Mammary epithelial cell (primary cell): ENCODE measurements at regions of chr5 and their contacts with region 1.

Region 1: GRCh38 chr5:126384985-126385384 is 38.2 kb upstream of the GRAMD2B start:
- DNase-seq: peak; percentile 60
- H3K4me3 ChIP-seq: peak overlapping the region in 1 of 3 experiments; percentile 5
- H3K27ac ChIP-seq: peak overlapping the region; percentile 55
- H3K4me1 ChIP-seq: peaks cover 23% of the 10 kb centered on the region
- H3K27me3 ChIP-seq: no peaks in the 10 kb centered on the region
- CTCF ChIP-seq: no peak

Region 2: DNA sequence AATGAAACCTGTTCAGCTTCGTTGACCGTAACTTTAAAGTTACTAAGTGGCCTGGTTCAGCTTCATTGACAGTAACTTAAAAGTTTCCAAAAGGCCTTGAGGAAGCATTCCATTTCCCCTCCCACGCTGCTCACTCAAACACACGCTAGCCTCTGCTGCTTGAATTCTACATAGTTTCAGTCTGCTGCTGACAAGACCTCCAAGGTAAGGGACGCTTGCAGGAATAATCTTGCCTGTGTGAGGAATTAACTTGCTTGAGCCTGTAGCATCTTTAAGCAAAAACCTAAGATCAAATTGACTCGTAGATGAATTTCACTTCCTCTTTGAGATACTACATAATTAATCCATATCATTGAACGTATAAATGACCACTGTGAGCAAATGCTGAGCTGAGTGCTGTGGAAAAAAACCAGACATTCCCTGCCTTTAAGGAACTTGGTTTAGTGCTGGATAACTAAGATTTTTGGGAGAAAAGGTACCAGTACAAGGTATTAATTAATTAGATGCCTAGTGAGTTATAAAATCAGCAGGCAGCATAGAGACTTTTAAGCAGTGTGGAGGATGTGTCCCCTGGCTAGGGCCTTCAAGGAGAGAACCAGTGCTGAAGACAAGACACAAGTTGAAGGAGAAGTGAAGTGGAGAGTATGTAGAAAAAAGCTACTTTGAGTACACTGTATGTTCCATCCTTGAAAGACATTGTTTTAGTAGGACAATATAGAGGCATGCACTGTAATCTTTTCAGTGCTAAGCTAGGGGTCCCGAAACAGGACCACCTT is 77.4 kb after region 1 on chr5:
- CTCF ChIA-PET with region 1: no interaction called
- dilution Hi-C with region 1: loop called (anchors 5 kb)
- in situ Hi-C with region 1: no loop called
- intact Hi-C with region 1: no loop called
- DNase-seq: peak; percentile 51
- H3K4me3 ChIP-seq: no peak overlapping the region
- H3K27ac ChIP-seq: peak overlapping the region; percentile 72
- H3K4me1 ChIP-seq: peaks cover 23% of the 10 kb centered on the region
- H3K27me3 ChIP-seq: no peaks in the 10 kb centered on the region
- CTCF ChIP-seq: no peak